Activated CD4-positive, alpha-beta T cell treated with anti-CD3 and anti-CD28 coated beads, Interleukin-2, amount 10 ng/mL, durations not matched to agents 24 days and 14 days (primary cell): ENCODE measurements at regions of chrX and their contacts with region 1.

Region 1: GRCh38 chrX:2595258-2595657 is 94.5 kb upstream of the DHRSX start:
- DNase-seq: no peak
- H3K4me3 Mint-ChIP-seq: no peak overlapping the region
- H3K27ac Mint-ChIP-seq: no peak overlapping the region
- H3K4me1 Mint-ChIP-seq: peaks cover 10% of the 10 kb centered on the region
- H3K27me3 Mint-ChIP-seq: no peaks in the 10 kb centered on the region

Region 2: GRCh38 chrX:1649621-1650020 is 945.6 kb before region 1 on chrX:
- intact Hi-C with region 1: loop called (anchors 1 kb)
- DNase-seq: no peak
- H3K4me3 Mint-ChIP-seq: no peak overlapping the region
- H3K27ac Mint-ChIP-seq: no peak overlapping the region
- H3K4me1 Mint-ChIP-seq: peaks cover 5% of the 10 kb centered on the region
- H3K27me3 Mint-ChIP-seq: peaks cover 2% of the 10 kb centered on the region

Region 3: DNA sequence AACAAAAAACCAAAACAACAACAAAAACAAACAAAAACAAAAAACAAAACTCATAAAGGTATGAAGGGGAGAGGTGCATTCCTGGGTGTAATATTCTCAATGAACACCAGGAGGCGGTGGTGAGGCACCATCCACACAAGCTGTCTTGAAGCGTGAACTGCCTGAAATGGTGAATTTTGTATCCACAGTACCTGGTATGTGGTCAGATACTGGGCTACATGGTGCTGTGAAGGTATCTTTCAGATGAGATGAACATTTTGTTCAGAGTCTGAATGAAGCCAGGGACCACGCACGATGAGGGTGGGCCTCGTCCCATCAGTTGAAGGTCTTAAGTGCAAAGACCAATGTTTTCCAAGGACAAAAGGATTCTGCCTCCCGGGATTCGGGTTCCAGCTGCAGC is 921.9 kb before region 1 on chrX:
- intact Hi-C with region 1: loop called (anchors 1 kb)
- DNase-seq: peak; percentile 82
- H3K4me3 Mint-ChIP-seq: no peak overlapping the region
- H3K27ac Mint-ChIP-seq: no peak overlapping the region
- H3K4me1 Mint-ChIP-seq: no peaks in the 10 kb centered on the region
- H3K27me3 Mint-ChIP-seq: no peaks in the 10 kb centered on the region

Region 4: DNA sequence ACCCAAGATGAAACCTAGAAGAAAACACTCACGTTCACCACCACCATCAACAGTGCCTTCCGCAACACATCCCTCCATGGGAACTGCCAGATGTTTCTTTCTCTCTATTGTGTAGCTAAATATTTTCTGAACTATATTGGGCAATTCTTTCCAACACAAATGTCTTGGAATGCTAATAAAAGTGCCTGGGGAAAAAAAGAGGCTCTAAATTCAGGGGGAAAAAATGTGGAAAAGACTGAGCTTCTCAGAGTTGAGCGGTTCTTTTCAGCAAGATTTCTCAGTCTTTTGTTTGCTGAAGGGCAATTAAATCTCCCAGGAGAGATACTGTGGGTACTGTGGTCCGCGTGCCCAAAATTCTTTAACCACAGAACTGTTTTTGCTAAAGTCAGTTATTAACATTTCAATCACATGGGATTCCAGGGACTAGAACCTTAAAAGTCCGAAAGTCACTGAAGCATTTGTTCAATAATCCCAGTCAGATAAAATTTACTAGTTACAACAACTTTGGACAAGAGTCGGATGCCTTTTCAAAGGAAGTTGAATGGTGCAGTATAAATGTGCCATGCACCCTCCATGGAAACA is 42.5 kb before region 1 on chrX:
- intact Hi-C with region 1: no loop called
- DNase-seq: no peak
- H3K4me3 Mint-ChIP-seq: no peak overlapping the region
- H3K27ac Mint-ChIP-seq: no peak overlapping the region
- H3K4me1 Mint-ChIP-seq: no peaks in the 10 kb centered on the region
- H3K27me3 Mint-ChIP-seq: no peaks in the 10 kb centered on the region